Left colon (tissue), 2 donors: ENCODE measurements at regions of chr4 and their contacts with region 1.

Region 1: GRCh38 chr4:147590249-147590920 is 26.8 kb upstream of the TMEM184C start:
- DNase-seq: peak in 1 of 2 donors; percentile 57
- ATAC-seq: no peak

Region 2: DNA sequence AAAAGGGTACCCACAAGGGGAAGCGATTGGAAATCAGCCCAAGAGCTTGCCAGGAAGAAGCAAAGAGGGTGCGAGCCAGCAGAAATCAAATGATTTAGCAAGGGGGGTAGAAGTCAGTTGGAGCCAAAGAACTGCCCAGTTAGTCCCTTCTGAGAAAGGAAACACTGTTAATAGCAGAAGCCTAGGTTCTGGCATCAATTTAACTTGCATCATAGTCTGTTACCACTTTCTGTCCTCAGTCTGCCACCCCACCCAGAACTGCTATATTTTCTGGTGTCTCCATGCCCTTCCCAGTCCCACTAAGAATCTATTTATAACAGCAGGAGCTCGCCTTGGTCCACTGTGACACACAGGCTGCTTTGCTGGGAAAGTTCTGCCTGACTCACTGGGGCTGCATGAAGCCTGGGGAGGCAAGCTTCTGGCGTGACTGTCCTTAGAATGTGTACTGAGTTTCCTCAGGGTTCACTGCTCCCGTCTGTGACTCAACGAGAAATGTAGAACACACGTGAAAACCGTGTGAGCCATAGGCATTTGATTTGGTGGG is 486.9 kb before region 1 on chr4:
- intact Hi-C with region 1: loop called in 1 of 2 experiments (anchors 10 kb)
- DNase-seq: no peak
- ATAC-seq: no peak

Region 3: DNA sequence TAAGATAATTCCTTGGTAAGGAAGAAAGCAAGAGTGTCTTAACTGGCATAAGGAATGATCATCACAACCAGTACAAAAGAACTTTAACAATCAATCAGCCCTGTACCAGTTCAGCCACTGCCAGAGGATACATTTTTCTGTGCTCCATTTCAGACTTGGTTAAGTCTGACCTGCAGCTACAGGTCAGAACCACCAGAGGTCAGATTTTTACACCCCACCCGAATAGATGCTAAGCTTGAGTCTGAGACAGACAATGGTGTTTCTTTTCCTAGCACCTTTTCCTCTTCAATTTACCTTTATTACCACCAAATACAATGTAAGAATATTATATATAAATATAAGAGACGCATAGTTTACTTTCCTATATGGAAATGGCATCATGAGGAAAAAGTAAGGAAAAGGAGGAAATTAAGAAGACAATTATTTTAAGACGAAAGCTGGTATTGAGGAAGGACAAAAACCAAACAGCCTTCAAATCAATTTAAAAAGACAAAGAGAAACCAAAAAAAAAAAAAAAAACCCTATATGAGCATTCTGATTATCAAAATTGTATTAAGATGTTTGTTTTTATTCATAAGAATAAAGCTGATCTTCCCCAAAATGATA is 429.4 kb before region 1 on chr4:
- intact Hi-C with region 1: loop called in 1 of 2 experiments (anchors 10 kb)
- DNase-seq: no peak
- ATAC-seq: peak; percentile 79

Region 4: GRCh38 chr4:147355847-147356246 is 234.5 kb before region 1 on chr4:
- intact Hi-C with region 1: no loop called
- DNase-seq: no peak
- ATAC-seq: no peak